ENCODE measurements at regions of chr4 and their contacts with region 1.

Region 1: DNA sequence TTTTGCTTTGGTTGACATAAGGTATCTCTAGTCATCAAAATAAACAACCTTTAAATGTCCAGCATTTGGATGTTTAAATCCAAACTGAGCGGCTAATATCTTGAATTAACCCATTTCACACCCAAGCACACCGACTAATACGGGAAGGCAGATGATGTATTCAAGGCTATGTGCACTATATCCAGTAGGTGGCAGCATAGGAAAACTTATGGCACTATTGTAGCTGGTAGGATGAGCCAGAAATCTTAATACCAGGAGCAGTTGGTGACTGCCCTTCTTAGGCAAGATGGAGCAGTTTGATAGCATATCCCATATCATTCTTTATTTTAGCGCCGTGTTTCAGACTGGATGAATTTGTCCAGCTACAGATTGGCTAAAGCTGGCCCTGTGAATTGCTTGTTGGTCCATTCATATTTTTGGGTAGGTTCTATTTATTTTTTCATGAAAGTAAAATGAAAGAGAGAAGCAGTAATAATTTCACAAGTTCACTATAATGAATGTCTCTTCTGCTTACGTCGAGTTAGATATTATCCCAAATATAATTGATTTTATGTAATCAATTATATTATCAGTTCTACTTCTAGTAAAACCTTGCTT is 24.4 kb downstream of the UCHL1 start:
- DNase-seq: peak; percentile 84
- H3K4me3 ChIP-seq: no peak overlapping the region
- H3K27ac ChIP-seq: no peak overlapping the region
- H3K4me1 ChIP-seq: no peaks in the 10 kb centered on the region; a peak in 1 of 4 replicates
- H3K27me3 ChIP-seq: no peaks in the 10 kb centered on the region
- CTCF ChIP-seq: peak; percentile 90
- EP300 ChIP-seq: no peak
- RAD21 ChIP-seq: peak; percentile 100

Region 2: GRCh38 chr4:41360214-41360920 is 79.2 kb after region 1 on chr4:
- CTCF ChIA-PET with region 1: interaction called, 10 read pairs
- POLR2A ChIA-PET with region 1: interaction called, 3 read pairs
- DNase-seq: peak; percentile 90
- H3K4me3 ChIP-seq: peak overlapping the region; percentile 62 to 65
- H3K27ac ChIP-seq: peak overlapping the region in 1 of 2 experiments; percentile 97; a peak in 2 of 4 replicates
- H3K4me1 ChIP-seq: peaks cover 0 to 39% of the 10 kb centered on the region in 2 experiments; a peak in 2 of 4 replicates
- H3K27me3 ChIP-seq: peaks cover 23% of the 10 kb centered on the region; the same call in 1 of the 2 replicates
- CTCF ChIP-seq: no peak
- EP300 ChIP-seq: no peak
- RAD21 ChIP-seq: no peak

Region 3: GRCh38 chr4:42488114-42488513 is 1207.0 kb after region 1 on chr4:
- CTCF ChIA-PET with region 1: no interaction called
- POLR2A ChIA-PET with region 1: no interaction called
- DNase-seq: no peak
- H3K4me3 ChIP-seq: no peak overlapping the region
- H3K27ac ChIP-seq: no peak overlapping the region
- H3K4me1 ChIP-seq: peaks cover 0 to 12% of the 10 kb centered on the region in 2 experiments; a peak in 2 of 4 replicates
- H3K27me3 ChIP-seq: no peaks in the 10 kb centered on the region
- CTCF ChIP-seq: no peak
- EP300 ChIP-seq: no peak
- RAD21 ChIP-seq: no peak

Measured in SK-N-SH (cell line).